ENCODE measurements at regions of chr1 and their contacts with region 1.

Region 1: GRCh38 chr1:15046487-15047165 is 106.9 kb upstream of the TMEM51 start:
- DNase-seq: peak; percentile 55 to 66
- ATAC-seq: peak; percentile 63 to 86 (median 77)
- H3K4me3 ChIP-seq: no peak overlapping the region
- H3K27ac ChIP-seq: no peak overlapping the region
- H3K4me1 ChIP-seq: no peaks in the 10 kb centered on the region
- H3K27me3 ChIP-seq: no peaks in the 10 kb centered on the region
- CTCF ChIP-seq: peak; percentile 76 to 96 (median 94)

Region 2: GRCh38 chr1:13662493-13662892 is 1384.1 kb before region 1 on chr1:
- intact Hi-C with region 1: loop called in 2 of 10 experiments (anchors 10 kb)
- DNase-seq: no peak
- ATAC-seq: peak in 3 of 8 donors; percentile 19 to 41 (median 34)
- H3K4me3 ChIP-seq: no peak overlapping the region
- H3K27ac ChIP-seq: peak overlapping the region in 1 of 10 donors; percentile 45
- H3K4me1 ChIP-seq: peaks cover 0 to 14% (median 0%) of the 10 kb centered on the region in 9 donors
- H3K27me3 ChIP-seq: peaks cover 0 to 6% (median 0%) of the 10 kb centered on the region in 7 donors
- CTCF ChIP-seq: no peak

Region 3: GRCh38 chr1:13960375-13960987 is 1086.1 kb before region 1 on chr1:
- intact Hi-C with region 1: loop called in 7 of 10 experiments (anchors 5 to 10 kb)
- DNase-seq: peak; percentile 51 to 60
- ATAC-seq: peak; percentile 20 to 77 (median 59)
- H3K4me3 ChIP-seq: no peak overlapping the region
- H3K27ac ChIP-seq: no peak overlapping the region
- H3K4me1 ChIP-seq: no peaks in the 10 kb centered on the region
- H3K27me3 ChIP-seq: peaks cover 0 to 39% (median 11%) of the 10 kb centered on the region in 7 donors
- CTCF ChIP-seq: peak; percentile 94 to 99 (median 97)

Region 4: GRCh38 chr1:13965770-13966398 is 1080.7 kb before region 1 on chr1:
- intact Hi-C with region 1: loop called in 8 of 10 experiments (anchors 2 to 10 kb)
- DNase-seq: peak; percentile 34 to 41
- ATAC-seq: peak; percentile 57 to 88 (median 70)
- H3K4me3 ChIP-seq: no peak overlapping the region
- H3K27ac ChIP-seq: no peak overlapping the region
- H3K4me1 ChIP-seq: no peaks in the 10 kb centered on the region
- H3K27me3 ChIP-seq: peaks cover 0 to 55% (median 18%) of the 10 kb centered on the region in 7 donors
- CTCF ChIP-seq: peak in 8 of 9 donors; percentile 21 to 59 (median 50)

Region 5: GRCh38 chr1:14094611-14095400 is 951.8 kb before region 1 on chr1:
- intact Hi-C with region 1: loop called in 1 of 10 experiments (anchors 5 kb)
- DNase-seq: no peak
- ATAC-seq: no peak
- H3K4me3 ChIP-seq: no peak overlapping the region
- H3K27ac ChIP-seq: no peak overlapping the region
- H3K4me1 ChIP-seq: no peaks in the 10 kb centered on the region
- H3K27me3 ChIP-seq: peaks cover 0 to 43% (median 10%) of the 10 kb centered on the region in 7 donors
- CTCF ChIP-seq: peak in 7 of 9 donors; percentile 11 to 48 (median 41)

Region 6: DNA sequence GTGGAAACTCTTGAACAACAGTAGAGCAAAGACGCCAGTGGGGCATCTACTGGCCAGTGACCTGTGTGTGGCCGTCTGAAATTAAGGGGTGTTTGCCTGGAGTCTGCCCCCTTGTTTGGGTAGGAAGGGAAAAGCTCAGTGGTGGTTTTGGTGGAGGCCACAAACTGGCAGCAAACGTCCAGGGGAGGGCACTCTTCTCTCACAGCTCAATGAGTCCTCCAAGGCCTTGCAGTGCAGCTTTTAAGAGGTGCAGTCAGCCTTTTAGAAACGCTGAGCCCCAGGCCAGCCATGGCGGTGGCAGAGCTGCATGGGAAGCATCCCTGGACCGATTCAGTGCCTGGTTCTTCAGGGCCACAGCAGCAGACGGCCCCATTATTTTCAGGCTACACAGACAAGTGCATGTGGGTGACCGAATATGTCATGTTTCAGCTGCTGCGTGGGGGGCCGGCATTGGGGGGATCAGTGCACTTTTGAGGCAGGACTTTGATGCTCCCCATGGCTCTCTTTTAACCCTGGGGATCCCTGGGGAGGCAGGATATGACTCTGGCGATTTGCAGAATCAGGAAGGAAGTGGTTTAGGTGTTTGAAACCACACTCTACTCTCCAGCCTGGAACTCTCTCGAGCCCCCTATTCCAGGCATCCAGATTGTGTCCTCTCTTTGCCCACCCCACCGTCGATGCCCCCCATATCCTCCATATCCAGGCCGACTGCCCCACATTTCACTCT is 932.6 kb before region 1 on chr1:
- intact Hi-C with region 1: loop called in 7 of 10 experiments (anchors 5 to 10 kb)
- DNase-seq: peak; percentile 20 to 31
- ATAC-seq: peak; percentile 56 to 77 (median 62)
- H3K4me3 ChIP-seq: no peak overlapping the region
- H3K27ac ChIP-seq: no peak overlapping the region
- H3K4me1 ChIP-seq: peaks cover 0 to 6% (median 0%) of the 10 kb centered on the region in 9 donors
- H3K27me3 ChIP-seq: no peaks in the 10 kb centered on the region
- CTCF ChIP-seq: peak; percentile 14 to 67 (median 57)

Region 7: GRCh38 chr1:14778898-14779865 is 267.4 kb before region 1 on chr1:
- intact Hi-C with region 1: loop called in 9 of 10 experiments (anchors 1 to 10 kb)
- DNase-seq: peak; percentile 6 to 25
- ATAC-seq: no peak
- H3K4me3 ChIP-seq: no peak overlapping the region
- H3K27ac ChIP-seq: no peak overlapping the region
- H3K4me1 ChIP-seq: peaks cover 0 to 3% (median 0%) of the 10 kb centered on the region in 9 donors
- H3K27me3 ChIP-seq: peaks cover 0 to 4% (median 0%) of the 10 kb centered on the region in 7 donors
- CTCF ChIP-seq: peak; percentile 48 to 76 (median 62)